A673 (cell line): ENCODE measurements at regions of chr11 and their contacts with region 1.

Region 1: GRCh38 chr11:100575870-100576705 is 111.0 kb upstream of the ARHGAP42 start:
- DNase-seq: peak; percentile 80
- H3K4me3 ChIP-seq: no peak overlapping the region
- H3K27ac ChIP-seq: no peak overlapping the region
- H3K4me1 ChIP-seq: peaks cover 18% of the 10 kb centered on the region
- H3K27me3 ChIP-seq: no peaks in the 10 kb centered on the region
- CTCF ChIP-seq: peak; percentile 87

Region 2: DNA sequence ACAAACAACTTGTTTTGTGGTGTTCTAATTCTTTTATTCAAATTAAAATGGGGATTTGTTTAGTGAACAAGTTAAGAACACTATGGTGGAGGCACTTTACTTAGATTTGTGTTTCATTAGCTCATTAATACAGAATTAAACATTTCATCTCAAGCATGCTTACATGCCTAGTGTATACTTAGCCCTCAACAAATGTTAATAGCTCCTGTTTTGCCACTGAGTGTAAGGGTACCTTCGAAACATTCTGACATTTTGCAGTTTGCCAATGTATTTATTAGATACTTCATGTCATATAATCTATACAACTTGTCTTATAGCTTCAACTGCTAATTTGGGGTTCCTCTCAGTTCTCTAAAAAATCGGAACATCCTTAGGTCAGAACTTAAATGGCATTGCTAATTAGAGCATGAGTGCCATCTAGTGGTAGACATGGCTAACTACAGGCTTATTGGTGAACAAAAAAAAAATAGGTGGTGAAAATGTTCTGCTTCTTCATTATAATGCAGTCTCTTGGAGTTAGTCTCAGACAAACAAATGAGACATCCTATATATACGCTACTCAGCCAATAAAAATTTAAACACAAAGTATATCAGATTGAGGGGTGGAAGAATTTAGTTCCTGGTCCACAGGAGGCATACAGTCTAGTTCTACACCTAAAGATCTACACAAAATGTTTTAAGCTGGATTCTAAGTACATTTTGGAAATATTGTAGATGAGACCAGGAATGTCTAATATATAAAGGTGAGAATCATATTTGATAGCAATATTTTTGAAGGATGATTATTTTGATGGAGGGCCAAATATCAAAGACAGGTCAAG is 1560.2 kb before region 1 on chr11:
- CTCF ChIA-PET with region 1: no interaction called
- POLR2A ChIA-PET with region 1: no interaction called
- intact Hi-C with region 1: loop called (anchors 5 kb)
- DNase-seq: peak; percentile 69
- H3K4me3 ChIP-seq: no peak overlapping the region
- H3K27ac ChIP-seq: no peak overlapping the region
- H3K4me1 ChIP-seq: peaks cover 7% of the 10 kb centered on the region
- H3K27me3 ChIP-seq: no peaks in the 10 kb centered on the region
- CTCF ChIP-seq: peak; percentile 95

Region 3: GRCh38 chr11:100681064-100681502 is 105.0 kb after region 1 on chr11:
- CTCF ChIA-PET with region 1: interaction called, 4 read pairs
- POLR2A ChIA-PET with region 1: no interaction called
- intact Hi-C with region 1: loop called (anchors 2 kb)
- DNase-seq: no peak
- H3K4me3 ChIP-seq: no peak overlapping the region
- H3K27ac ChIP-seq: no peak overlapping the region
- H3K4me1 ChIP-seq: no peaks in the 10 kb centered on the region
- H3K27me3 ChIP-seq: no peaks in the 10 kb centered on the region
- CTCF ChIP-seq: no peak

Region 4: DNA sequence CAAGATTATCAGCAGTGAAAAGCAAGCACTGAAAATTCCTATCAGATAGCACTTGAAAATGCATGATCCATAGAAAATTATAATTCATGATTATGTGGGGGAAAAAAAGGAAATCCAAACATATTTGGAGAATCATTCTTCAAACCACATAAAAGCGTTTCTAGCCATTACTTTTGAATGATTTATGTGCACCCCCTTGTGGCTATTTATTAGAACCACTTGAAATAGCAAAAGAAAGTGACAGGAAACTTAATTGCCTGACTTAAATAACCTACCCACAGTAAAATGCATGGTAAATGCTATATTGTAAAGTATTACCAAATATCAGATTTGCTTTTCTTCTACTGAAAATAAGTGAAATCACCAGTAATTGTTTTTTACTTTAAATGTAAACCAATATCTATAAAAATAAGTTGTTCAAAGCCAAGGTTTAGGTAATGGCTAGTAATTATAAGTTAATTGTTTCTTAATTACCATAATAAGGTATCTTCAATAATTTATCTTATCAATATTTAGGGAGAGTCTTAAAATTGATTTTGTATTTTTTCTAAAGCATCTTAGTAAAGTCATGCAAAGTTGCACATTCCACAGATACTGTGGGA is 279.5 kb after region 1 on chr11:
- CTCF ChIA-PET with region 1: interaction called, 5 read pairs
- POLR2A ChIA-PET with region 1: no interaction called
- intact Hi-C with region 1: loop called (anchors 1 kb)
- DNase-seq: peak; percentile 85
- H3K4me3 ChIP-seq: no peak overlapping the region
- H3K27ac ChIP-seq: no peak overlapping the region
- H3K4me1 ChIP-seq: peaks cover 10% of the 10 kb centered on the region
- H3K27me3 ChIP-seq: no peaks in the 10 kb centered on the region
- CTCF ChIP-seq: peak; percentile 69

Region 5: GRCh38 chr11:101436511-101437142 is 860.5 kb after region 1 on chr11:
- CTCF ChIA-PET with region 1: no interaction called
- POLR2A ChIA-PET with region 1: no interaction called
- intact Hi-C with region 1: loop called (anchors 2 kb)
- DNase-seq: peak; percentile 49
- H3K4me3 ChIP-seq: no peak overlapping the region
- H3K27ac ChIP-seq: no peak overlapping the region
- H3K4me1 ChIP-seq: no peaks in the 10 kb centered on the region
- H3K27me3 ChIP-seq: no peaks in the 10 kb centered on the region
- CTCF ChIP-seq: peak; percentile 84